HEK293 (cell line): ENCODE measurements at regions of chr14 and their contacts with region 1.

Region 1: DNA sequence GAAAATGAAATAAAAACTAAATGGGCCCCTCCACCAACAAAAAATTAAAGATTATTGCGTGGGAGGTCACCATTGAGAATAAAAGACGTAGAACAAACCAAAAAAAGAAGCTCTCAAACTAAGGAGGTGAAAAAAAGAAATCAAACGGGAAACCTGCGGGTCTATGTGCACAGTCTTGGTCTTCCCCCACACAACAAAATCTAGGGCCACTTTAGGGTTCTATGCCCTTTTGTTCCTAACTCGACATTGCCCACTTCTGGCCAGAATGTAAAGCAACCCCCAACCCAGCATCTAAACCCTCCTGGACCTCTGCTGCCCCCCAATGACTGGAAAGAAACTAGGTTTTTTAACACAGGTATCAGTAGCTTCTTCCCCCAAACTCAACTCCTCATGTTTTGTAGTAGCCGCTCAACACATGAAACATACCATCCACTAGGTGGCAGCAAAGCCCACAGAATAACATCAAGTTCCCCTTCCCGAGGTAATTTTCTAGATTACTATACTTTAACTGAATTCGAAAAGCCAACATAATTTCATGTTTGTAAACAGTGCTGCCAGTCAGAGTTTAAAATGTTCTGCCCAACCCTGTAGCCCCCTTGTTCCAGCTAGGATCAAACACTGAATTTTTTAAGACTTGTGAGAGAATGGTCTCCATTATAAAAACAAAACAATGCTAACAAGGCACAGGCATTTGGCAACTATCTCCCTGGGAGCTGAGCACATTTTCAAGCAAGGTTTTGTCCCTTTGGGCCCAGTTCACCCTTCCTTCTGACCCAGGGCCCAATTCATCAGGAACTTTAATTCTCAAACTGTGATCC is 18.7 kb downstream of the DAD1 start:
- H3K4me3 ChIP-seq: no peak overlapping the region
- H3K27ac ChIP-seq: no peak overlapping the region
- H3K4me1 ChIP-seq: peaks cover 2% of the 10 kb centered on the region; the same call in 1 of the 2 replicates
- CTCF ChIP-seq: peak; percentile 83

Region 2: DNA sequence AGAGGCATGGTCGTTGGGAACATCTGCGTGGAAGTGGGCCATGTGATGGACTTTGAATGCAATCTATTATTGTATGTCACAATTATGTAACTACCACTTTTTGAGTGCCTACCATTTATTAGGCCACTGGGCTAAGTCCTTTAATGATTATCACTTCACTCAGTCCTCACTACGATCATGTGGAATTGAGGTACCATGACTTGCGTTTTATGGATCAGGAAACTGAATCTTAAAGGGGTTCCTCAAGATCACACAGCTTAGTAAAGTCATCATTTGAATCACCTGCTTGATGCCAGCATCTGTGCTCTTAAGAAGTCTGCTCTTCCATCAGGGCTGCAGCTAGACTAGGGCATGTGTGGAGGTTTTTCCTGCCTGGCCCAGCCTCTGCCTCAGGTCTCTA is 118.0 kb before region 1 on chr14:
- CTCF ChIA-PET with region 1: no interaction called
- POLR2A ChIA-PET with region 1: no interaction called
- H3K4me3 ChIP-seq: no peak overlapping the region
- H3K27ac ChIP-seq: no peak overlapping the region
- H3K4me1 ChIP-seq: no peaks in the 10 kb centered on the region
- CTCF ChIP-seq: no peak

Region 3: DNA sequence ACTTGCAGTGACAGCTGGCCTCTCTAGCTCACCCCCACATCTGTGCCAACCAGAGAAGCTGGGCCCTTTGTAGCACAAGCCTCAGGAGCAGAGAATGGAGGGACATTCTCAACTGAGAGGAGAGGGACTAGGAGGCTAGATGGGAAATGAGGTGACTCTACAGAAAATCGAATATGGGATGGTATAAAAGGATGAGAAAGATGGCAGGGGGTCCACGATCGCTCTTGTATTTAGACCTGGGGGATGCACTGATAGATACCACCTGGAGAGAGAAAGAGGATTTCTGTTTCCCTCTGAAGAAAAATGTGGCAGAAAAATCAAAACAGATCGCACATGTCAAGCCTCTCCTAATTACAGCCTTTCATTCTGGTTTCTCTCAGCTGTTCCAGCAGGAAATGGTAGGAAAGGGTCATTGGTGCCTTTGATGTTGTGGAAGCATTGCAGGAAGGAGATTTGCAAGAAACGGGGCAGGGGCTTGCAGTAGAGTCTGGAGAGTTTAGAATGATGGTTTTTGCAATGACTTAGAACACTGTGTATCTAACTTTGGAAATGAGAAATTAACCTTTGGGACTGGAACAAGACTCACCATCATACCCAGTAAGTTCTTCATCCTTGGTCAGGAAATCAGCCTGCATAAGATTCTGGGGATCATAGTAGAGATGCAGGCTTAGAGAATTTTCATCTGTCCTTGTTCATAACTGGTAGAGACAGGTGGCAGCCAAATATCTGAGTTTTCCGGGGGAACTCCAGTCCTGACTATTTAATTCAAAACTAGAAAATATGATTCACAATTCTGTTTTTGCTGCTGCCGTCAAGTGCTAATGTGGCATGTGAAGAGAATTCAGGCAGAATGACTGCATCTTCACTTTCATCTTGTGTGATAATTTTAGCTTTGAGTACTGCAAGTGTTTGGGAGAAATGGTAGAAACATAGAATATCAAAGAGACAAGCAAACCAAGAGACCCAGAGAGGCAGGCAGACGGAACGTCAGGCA is 80.1 kb before region 1 on chr14:
- CTCF ChIA-PET with region 1: no interaction called
- POLR2A ChIA-PET with region 1: no interaction called
- H3K4me3 ChIP-seq: no peak overlapping the region
- H3K27ac ChIP-seq: no peak overlapping the region
- H3K4me1 ChIP-seq: no peaks in the 10 kb centered on the region
- CTCF ChIP-seq: no peak

Region 4: DNA sequence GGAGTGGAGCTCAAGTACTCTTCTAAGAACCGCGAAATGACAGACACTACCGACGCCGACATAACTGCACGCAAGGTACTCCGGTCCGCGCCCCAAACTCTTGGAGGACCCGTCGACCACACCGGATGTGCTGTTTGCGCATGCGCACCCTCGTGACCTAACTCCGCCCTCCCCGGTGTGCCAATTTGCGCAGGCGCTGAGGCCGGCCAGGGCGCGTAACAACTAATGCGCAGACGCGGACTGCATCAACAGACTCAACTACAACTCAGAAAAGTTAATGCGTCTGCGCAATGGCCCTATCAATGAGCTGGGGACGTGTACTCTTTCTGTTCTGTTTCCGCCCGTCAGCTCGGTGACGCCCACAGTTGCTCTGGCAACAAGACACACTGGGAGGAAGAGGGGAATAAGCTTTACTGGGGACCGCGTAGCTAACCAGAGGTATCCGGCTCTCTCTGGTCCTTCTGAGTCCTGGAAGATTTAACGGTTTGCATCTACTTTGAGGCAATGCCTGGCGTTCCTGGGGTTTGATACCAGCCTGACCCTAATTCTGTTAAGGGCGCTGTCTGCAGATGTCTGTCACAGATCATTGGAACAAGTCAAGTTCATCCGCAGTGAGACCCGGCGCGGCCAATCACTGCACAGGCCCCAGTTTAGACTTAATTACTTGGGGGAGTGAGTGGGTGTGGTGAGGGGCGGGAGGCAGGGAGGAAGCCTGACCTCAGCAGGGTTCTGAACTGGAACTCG is 18.9 kb after region 1 on chr14 and contains the start of gene DAD1:
- CTCF ChIA-PET with region 1: interaction called, 27 read pairs
- POLR2A ChIA-PET with region 1: interaction called, 6 read pairs
- H3K4me3 ChIP-seq: peak within 1 kb of the TSS; percentile 87
- H3K27ac ChIP-seq: peak within 1 kb of the TSS; percentile 49; the same call in 1 of the 2 replicates
- H3K4me1 ChIP-seq: no peaks in the 10 kb centered on the region
- CTCF ChIP-seq: no peak; the same call in 1 of the 2 replicates

Region 5: DNA sequence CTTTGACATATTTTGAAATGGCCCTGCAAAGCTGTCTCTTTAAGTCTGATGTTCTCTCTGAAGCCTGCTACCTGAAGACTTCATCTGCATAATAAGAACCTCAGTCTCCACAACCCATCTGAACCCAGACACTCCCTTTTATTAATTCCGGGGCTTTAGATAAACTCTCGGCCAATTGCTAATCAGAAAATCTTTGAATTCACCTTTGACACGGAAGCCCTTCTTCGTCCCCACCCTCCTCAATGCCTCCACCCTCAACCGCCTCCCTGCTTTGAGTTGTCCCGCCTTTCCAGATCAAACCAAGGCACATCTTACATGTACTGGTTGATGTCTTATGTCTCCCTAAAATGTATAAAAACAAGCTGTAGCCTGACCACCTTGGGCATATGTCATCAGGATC is 56.2 kb after region 1 on chr14:
- CTCF ChIA-PET with region 1: no interaction called
- POLR2A ChIA-PET with region 1: no interaction called
- H3K4me3 ChIP-seq: no peak overlapping the region
- H3K27ac ChIP-seq: no peak overlapping the region
- H3K4me1 ChIP-seq: peaks cover 4% of the 10 kb centered on the region; the same call in 1 of the 2 replicates
- CTCF ChIP-seq: no peak

Region 6: DNA sequence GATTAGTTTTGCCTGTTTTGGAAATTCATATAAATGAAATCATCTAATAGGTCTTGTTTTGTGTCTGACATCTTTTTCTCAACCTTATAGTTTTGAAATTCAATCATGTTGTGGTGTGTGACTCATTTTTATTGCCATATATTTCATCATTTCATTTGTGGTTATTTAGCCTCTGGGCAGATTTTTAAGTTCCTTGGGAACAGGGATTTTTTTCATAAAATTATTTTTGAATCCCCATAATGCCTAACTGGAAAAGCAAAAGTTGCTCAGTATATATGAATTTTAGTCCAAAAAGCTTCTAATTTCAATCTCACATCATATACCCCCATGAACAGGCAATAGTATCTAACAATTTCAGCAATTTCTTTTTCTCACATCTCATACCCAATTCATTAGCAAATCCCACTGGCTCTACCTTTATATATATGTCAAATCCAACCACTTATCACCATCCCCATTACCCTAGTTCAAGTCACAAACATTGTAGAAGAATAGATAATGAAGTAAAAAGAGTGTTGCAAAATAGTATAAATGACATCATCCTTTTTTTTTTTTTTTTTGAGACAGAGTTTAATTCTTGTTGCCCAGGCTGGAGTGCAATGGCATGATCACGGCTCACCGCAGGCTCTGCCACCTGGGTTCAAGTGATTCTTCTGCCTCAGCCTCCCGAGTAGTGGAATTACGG is 76.4 kb after region 1 on chr14:
- CTCF ChIA-PET with region 1: interaction called, 91 read pairs
- POLR2A ChIA-PET with region 1: no interaction called
- H3K4me3 ChIP-seq: no peak overlapping the region
- H3K27ac ChIP-seq: no peak overlapping the region
- H3K4me1 ChIP-seq: no peaks in the 10 kb centered on the region; the same call in 1 of the 2 replicates
- CTCF ChIP-seq: no peak

Region 7: GRCh38 chr14:22766456-22767322 is 196.3 kb after region 1 on chr14 and contains the start of gene OXA1L:
- CTCF ChIA-PET with region 1: interaction called, 23 read pairs
- POLR2A ChIA-PET with region 1: interaction called, 4 read pairs
- H3K4me3 ChIP-seq: peak within 1 kb of the TSS; percentile 94
- H3K27ac ChIP-seq: peak within 1 kb of the TSS; percentile 58
- H3K4me1 ChIP-seq: no peaks in the 10 kb centered on the region; the same call in 1 of the 2 replicates
- CTCF ChIP-seq: no peak

Region 8: GRCh38 chr14:22822571-22823098 is 252.3 kb after region 1 on chr14:
- CTCF ChIA-PET with region 1: interaction called, 12 read pairs
- POLR2A ChIA-PET with region 1: no interaction called
- H3K4me3 ChIP-seq: peak overlapping the region; percentile 15
- H3K27ac ChIP-seq: no peak overlapping the region
- H3K4me1 ChIP-seq: peaks cover 2% of the 10 kb centered on the region; the same call in 1 of the 2 replicates
- CTCF ChIP-seq: peak; percentile 68